ENCODE measurements at regions of chr9 and their contacts with region 1.

Region 1: DNA sequence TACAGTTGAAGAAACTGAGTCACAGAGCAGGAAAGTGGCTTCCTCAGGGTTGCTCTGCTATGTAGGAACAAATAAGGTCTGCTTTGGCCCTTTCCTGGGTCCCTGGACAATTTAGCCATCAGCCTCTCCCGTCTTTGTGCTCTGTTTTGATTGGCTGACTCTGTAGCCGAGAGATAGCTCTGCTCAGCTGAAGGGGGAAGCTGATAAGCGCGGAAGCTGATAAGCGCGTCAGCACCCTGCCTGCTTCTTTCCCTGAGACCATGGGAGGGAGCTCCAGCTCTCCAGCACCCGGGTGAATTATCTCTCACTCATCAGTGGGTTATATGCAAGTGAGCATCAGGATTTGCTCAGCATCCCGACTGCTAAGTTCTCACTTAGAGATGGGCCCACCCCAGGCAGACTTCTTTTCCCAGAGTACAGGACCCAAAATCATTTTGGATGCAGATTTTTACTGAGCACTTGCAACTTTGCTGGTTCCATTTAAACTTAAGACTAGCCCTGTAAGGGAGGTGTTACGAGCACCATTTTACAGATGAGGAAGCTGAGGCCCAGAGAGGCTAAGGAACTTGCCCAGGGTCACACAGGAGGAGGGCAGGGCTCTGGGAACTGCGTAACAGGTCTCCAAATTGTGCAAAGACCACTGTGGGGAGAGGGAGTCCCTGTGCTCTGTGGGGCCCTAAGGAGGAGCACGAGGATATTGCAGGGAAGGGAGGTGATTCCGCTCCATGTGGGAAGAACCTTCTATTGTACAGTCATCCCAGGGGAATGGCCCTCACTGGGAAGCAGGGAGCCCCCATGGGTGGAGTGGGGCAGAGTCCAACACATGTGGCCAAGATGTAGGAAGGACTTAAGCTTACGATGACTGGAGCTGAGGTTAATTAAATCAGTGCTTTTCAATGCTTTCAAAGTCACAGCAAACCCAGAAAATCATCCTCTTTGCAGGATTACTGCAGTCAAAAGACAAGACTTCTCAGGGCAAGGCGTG is 83.7 kb upstream of the ORM1 start:
- DNase-seq: peak in 4 of 5 donors; percentile 47 to 66 (median 56)
- ATAC-seq: peak; percentile 54 to 79 (median 68)
- H3K4me3 ChIP-seq: no peak overlapping the region
- H3K27ac ChIP-seq: peak overlapping the region in 8 of 12 donors; percentile 20 to 74 (median 54)
- H3K4me1 ChIP-seq: peaks cover 0 to 46% (median 27%) of the 10 kb centered on the region in 12 donors
- H3K27me3 ChIP-seq: no peaks in the 10 kb centered on the region
- CTCF ChIP-seq: peak in 10 of 12 donors; percentile 17 to 62 (median 34)
- POLR2A ChIP-seq: no peak

Region 2: DNA sequence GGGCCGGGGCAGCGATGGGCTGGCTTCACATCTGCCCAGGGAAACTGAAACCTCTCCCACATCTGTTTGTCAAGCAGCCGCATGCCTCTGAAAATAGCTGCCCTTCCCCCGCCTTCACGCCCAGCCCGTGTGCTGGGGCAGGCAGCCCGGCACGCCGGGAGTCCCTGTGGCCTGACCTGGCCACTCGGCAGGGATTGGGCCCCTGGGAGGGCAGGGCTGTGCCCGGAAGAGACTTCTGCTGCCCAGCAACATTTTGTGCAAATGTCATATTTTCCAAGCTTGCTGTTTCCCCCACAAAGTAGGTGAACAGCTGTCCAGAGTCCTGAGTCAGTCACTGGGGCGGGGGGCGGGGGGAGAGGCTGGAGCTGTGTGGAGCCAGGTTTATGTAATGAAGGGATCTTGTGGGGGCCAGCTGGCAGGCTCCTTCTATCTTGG is 75.6 kb before region 1 on chr9:
- intact Hi-C with region 1: loop called in 3 of 10 experiments (anchors 5 kb)
- DNase-seq: peak in 4 of 5 donors; percentile 42 to 76 (median 62)
- ATAC-seq: peak; percentile 77 to 87 (median 84)
- H3K4me3 ChIP-seq: peak overlapping the region in 2 of 12 donors; percentile 1 to 15
- H3K27ac ChIP-seq: peak overlapping the region in 3 of 12 donors; percentile 13 to 51 (median 22)
- H3K4me1 ChIP-seq: peaks cover 0 to 37% (median 18%) of the 10 kb centered on the region in 12 donors
- H3K27me3 ChIP-seq: no peaks in the 10 kb centered on the region
- CTCF ChIP-seq: no peak
- POLR2A ChIP-seq: no peak

Measured in heart left ventricle (tissue), 16 donors.